Caco-2 (cell line): ENCODE measurements at regions of chr5 and their contacts with region 1.

Region 1: GRCh38 chr5:16456103-16456832 is 9.3 kb downstream of the ZNF622 start:
- DNase-seq: peak in 1 of 2 experiments; percentile 60
- H3K4me3 ChIP-seq: no peak overlapping the region
- H3K4me3 Mint-ChIP-seq: no peak overlapping the region
- H3K27ac Mint-ChIP-seq: no peak overlapping the region
- H3K4me1 ChIP-seq: no peaks in the 10 kb centered on the region
- H3K4me1 Mint-ChIP-seq: peaks cover 23% of the 10 kb centered on the region
- H3K27me3 ChIP-seq: no peaks in the 10 kb centered on the region
- H3K27me3 Mint-ChIP-seq: no peaks in the 10 kb centered on the region
- CTCF ChIP-seq: peak; percentile 51 to 73

Region 2: GRCh38 chr5:16160706-16161105 is 295.6 kb before region 1 on chr5:
- CTCF ChIA-PET with region 1: interaction called, 51 read pairs
- POLR2A ChIA-PET with region 1: no interaction called
- intact Hi-C with region 1: loop called (anchors 1 kb)
- DNase-seq: peak; percentile 47 to 61
- H3K4me3 ChIP-seq: no peak overlapping the region
- H3K4me3 Mint-ChIP-seq: no peak overlapping the region
- H3K27ac Mint-ChIP-seq: no peak overlapping the region
- H3K4me1 ChIP-seq: no peaks in the 10 kb centered on the region
- H3K4me1 Mint-ChIP-seq: no peaks in the 10 kb centered on the region
- H3K27me3 ChIP-seq: no peaks in the 10 kb centered on the region
- H3K27me3 Mint-ChIP-seq: peaks cover 7% of the 10 kb centered on the region
- CTCF ChIP-seq: peak; percentile 67 to 79

Region 3: DNA sequence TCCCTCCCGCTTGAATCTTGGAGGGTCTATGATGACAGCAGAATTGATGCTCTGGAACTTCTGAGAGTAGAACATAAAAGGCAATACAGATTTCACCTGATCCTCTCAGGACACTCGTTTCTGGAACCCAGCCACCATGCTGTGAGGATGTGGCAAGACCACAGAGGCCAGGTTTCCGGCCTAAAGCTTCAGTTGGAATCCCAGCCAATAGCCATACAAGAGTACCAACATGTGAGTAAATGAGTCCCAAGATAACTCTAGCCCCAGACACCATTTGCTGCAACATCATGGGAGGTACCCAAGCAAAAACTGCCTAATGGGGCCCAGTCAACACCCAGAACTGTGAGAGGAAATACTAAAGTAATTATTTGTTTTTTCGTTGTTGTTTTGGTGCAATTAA is 211.0 kb before region 1 on chr5:
- CTCF ChIA-PET with region 1: no interaction called
- POLR2A ChIA-PET with region 1: no interaction called
- intact Hi-C with region 1: loop called (anchors 10 kb)
- DNase-seq: no peak
- H3K4me3 ChIP-seq: no peak overlapping the region
- H3K4me3 Mint-ChIP-seq: no peak overlapping the region
- H3K27ac Mint-ChIP-seq: no peak overlapping the region
- H3K4me1 ChIP-seq: no peaks in the 10 kb centered on the region
- H3K4me1 Mint-ChIP-seq: no peaks in the 10 kb centered on the region
- H3K27me3 ChIP-seq: no peaks in the 10 kb centered on the region; the same call in 1 of the 2 replicates
- H3K27me3 Mint-ChIP-seq: peaks cover 6% of the 10 kb centered on the region
- CTCF ChIP-seq: no peak

Region 4: DNA sequence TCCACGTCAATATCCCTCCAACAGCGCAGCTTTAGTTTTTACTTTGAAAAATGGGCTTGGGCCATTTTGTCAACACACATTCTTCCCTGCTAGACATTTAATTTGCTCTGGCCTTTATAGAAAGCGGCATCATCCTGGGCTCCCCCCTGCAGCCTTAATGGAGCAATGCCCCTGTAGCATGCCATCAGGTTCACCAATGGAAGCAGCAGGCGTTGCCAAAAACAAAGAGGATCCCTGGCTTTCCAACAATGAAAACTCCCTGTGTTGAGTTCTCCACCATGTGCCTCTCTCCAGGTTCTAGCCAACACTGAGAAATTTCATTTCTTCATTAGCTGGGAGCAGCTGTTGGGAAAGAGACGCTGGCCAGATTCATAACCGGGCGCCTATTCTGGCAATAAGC is 130.1 kb before region 1 on chr5:
- CTCF ChIA-PET with region 1: no interaction called
- POLR2A ChIA-PET with region 1: no interaction called
- intact Hi-C with region 1: loop called (anchors 5 kb)
- DNase-seq: no peak
- H3K4me3 ChIP-seq: no peak overlapping the region
- H3K4me3 Mint-ChIP-seq: no peak overlapping the region
- H3K27ac Mint-ChIP-seq: no peak overlapping the region
- H3K4me1 ChIP-seq: no peaks in the 10 kb centered on the region
- H3K4me1 Mint-ChIP-seq: no peaks in the 10 kb centered on the region
- H3K27me3 ChIP-seq: no peaks in the 10 kb centered on the region
- H3K27me3 Mint-ChIP-seq: no peaks in the 10 kb centered on the region
- CTCF ChIP-seq: no peak

Region 5: DNA sequence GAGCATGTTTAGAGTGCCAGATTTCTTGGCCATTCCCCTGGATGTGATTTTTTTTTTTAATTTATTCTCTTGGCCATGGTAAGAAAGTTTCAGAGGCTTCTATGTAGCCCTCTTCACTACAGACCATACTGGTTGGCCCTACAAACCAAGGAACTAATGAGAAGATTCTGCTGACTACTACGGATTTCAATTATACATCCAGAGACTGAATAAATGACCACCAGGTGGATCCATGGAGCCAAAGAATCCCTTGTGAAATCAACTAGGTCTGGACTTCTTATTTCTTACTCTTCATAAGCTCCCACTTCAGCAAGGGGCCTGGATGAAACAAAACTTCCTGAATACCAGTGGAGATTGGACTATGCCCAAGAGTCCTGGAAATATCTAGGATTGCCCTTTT is 18.3 kb before region 1 on chr5:
- CTCF ChIA-PET with region 1: interaction called, 10 read pairs
- POLR2A ChIA-PET with region 1: no interaction called
- intact Hi-C with region 1: no loop called
- DNase-seq: no peak
- H3K4me3 ChIP-seq: no peak overlapping the region
- H3K4me3 Mint-ChIP-seq: no peak overlapping the region
- H3K27ac Mint-ChIP-seq: no peak overlapping the region
- H3K4me1 ChIP-seq: no peaks in the 10 kb centered on the region
- H3K4me1 Mint-ChIP-seq: no peaks in the 10 kb centered on the region
- H3K27me3 ChIP-seq: no peaks in the 10 kb centered on the region
- H3K27me3 Mint-ChIP-seq: no peaks in the 10 kb centered on the region
- CTCF ChIP-seq: peak in 1 of 2 experiments; percentile 43

Region 6: DNA sequence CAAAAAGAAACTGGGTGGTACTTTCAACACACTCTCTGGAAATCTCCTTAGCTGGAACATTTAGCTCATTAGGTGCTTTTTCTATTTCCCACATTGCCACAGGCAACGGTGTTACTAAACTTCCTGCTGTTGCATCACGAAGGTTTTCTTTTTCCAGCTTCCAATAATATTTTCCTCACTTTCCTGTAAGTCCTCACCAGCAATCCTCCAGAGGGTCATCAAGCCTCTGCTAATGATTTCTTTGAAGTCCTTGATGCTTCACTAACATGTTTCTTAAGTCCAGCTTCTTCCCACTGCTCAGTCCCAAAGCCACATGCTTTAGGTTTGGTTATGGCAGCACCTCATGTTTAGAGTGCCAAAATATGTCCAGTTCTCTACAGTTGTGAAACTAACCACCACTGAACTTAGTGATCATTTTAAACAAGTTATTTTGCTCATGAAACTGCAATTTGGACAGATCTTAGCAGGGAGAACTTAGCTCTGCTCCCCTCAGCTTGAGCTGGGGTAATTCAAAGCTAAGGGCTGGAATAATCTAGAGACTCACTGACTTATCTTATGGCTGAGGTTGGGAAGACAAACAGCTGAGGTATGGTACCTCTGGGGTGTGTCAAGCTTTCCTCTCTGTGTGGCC is 200.4 kb after region 1 on chr5:
- CTCF ChIA-PET with region 1: no interaction called
- POLR2A ChIA-PET with region 1: no interaction called
- intact Hi-C with region 1: no loop called
- DNase-seq: no peak
- H3K4me3 ChIP-seq: no peak overlapping the region
- H3K4me3 Mint-ChIP-seq: no peak overlapping the region
- H3K27ac Mint-ChIP-seq: no peak overlapping the region
- H3K4me1 ChIP-seq: no peaks in the 10 kb centered on the region
- H3K4me1 Mint-ChIP-seq: peaks cover 4% of the 10 kb centered on the region
- H3K27me3 ChIP-seq: no peaks in the 10 kb centered on the region
- H3K27me3 Mint-ChIP-seq: no peaks in the 10 kb centered on the region
- CTCF ChIP-seq: no peak

Region 7: DNA sequence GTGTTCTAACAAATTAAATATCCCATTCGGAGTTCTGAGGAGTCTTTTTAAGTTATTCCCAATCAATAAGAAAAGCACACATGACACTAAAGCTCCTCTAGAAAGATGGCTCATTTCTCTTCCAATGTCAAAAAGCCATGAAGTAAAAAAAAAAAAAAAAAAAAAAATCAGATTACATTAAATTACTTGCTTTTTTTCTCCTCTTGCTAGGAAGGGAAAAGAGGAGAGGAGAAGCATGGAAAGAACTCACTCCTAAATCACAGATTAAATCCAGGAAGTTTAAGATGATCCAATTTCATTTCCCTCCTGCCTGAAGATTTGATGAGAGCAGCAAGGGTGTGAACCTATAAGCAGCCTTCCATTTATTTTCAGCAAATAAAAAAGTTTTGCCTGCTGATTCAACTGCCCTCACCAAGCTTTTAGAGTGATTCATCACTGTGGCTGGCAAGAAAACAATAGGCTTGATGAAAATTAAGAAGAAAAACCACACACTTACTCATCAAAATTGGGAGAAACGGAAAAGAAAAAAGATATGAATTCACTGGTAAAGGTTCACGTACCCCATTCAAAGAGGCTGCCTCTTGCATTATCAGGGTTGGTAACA is 460.1 kb after region 1 on chr5:
- CTCF ChIA-PET with region 1: no interaction called
- POLR2A ChIA-PET with region 1: no interaction called
- intact Hi-C with region 1: no loop called
- DNase-seq: no peak
- H3K4me3 ChIP-seq: no peak overlapping the region
- H3K4me3 Mint-ChIP-seq: no peak overlapping the region
- H3K27ac Mint-ChIP-seq: peak overlapping the region; percentile 9
- H3K4me1 ChIP-seq: peaks cover 28% of the 10 kb centered on the region
- H3K4me1 Mint-ChIP-seq: peaks cover 21% of the 10 kb centered on the region
- H3K27me3 ChIP-seq: no peaks in the 10 kb centered on the region
- H3K27me3 Mint-ChIP-seq: no peaks in the 10 kb centered on the region
- CTCF ChIP-seq: no peak